Sigmoid colon (tissue), 7 donors: ENCODE measurements at regions of chr18 and their contacts with region 1.

Region 1: DNA sequence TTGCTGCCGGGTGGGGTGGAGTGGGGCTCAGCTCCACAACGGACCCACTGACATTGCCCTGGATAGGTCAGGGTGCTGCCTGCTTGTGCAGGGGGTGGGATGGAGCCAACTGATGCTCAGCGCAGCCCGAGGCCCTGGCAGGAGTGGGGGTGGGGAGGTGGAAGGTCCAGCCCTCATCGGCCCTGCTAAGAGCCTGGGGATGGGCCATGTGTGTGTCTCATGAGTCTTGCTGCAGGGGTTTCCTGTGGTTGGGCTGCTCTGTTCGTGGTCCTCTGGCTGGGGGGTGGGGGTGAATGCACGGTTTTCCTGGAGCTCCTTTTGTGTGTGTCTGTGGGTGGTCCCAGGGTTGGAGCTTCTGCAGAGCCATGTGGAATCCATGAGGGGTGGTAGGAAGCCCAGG is 39.4 kb upstream of the GALR1 start:
- DNase-seq: no peak
- H3K4me3 ChIP-seq: no peak overlapping the region
- H3K27ac ChIP-seq: no peak overlapping the region
- H3K4me1 ChIP-seq: peaks cover 0 to 18% (median 17%) of the 10 kb centered on the region in 4 donors
- H3K27me3 ChIP-seq: no peaks in the 10 kb centered on the region
- CTCF ChIP-seq: no peak
- EP300 ChIP-seq: no peak
- POLR2A ChIP-seq: no peak

Region 2: DNA sequence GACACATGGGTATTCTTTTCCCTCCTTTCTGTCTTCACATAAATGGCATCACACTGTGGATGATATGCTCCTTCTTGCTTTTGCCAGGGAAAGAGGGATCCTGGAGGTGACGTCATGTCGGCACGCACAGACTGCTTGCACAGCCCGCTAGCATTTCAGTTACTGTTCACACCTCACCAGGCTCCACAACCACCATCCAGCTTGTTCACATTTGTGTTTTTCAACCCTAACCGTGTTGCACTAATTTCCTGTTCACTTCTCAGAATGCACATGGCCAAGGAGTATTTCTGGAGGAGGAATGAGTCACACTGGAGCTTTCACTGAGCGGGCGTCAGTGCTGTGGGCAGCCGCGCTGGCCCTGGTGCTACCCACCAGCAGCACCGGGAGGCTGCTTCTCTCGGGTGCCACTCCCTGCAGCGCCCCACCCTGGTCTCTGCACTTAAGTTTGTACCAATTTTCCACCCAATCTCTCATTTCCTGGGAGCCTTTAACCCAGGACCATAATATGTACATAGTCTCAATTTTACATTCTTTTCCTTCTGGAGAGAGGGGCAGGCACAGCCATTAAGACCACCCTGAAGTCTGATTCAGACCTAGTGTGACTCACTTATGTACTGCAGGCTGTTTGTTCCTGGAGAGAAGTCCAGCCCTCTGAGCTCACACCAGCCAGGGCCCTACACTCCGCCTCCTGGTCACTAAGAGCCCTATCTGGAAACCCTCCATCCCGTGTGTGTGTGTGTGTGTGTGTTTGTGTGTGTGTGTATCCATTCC is 142.8 kb before region 1 on chr18:
- intact Hi-C with region 1: loop called (anchors 5 kb)
- DNase-seq: peak; percentile 84
- H3K4me3 ChIP-seq: no peak overlapping the region
- H3K27ac ChIP-seq: peak overlapping the region; percentile 63 to 78 (median 72)
- H3K4me1 ChIP-seq: peaks cover 0 to 51% (median 28%) of the 10 kb centered on the region in 4 donors
- H3K27me3 ChIP-seq: no peaks in the 10 kb centered on the region
- CTCF ChIP-seq: no peak
- EP300 ChIP-seq: no peak
- POLR2A ChIP-seq: no peak

Region 3: DNA sequence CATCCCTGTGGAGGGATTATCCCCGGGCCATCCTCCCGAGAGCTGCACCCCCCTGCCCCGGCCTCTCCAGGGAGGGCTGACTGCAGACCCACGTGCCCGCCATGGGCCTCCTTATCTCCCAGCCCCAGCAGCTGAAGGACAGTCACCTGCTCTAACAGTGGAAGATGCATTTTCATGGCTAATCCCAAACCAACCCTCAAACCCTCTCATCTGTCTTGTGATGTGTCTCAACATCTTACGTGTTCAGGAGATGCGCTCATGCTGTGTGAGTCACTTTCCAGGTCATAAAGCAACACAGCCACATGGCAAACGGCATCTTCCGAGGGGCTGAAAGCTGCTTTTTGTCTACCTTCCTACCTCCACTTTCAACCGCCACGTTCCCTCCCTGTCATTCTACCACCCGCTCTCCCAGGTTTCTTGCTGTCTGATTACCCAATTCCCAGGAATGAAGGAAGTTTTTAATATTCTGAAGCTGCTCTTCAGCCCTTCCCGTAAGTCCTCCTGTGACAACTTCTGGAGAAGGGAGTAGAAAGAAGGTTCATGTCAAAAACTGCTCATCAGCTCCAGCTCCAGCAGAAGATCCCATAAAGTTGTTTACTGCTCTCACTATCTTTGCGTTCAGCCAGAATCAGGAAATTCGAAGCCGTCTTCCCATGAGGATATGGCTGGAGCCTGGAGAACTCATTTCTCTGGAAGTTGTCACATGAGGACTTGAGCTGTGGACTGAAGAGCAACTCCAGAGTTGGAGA is 132.1 kb before region 1 on chr18:
- intact Hi-C with region 1: no loop called
- DNase-seq: no peak
- H3K4me3 ChIP-seq: no peak overlapping the region
- H3K27ac ChIP-seq: peak overlapping the region in 1 of 4 donors; percentile 28
- H3K4me1 ChIP-seq: peaks cover 0 to 11% (median 0%) of the 10 kb centered on the region in 4 donors
- H3K27me3 ChIP-seq: no peaks in the 10 kb centered on the region
- CTCF ChIP-seq: no peak
- EP300 ChIP-seq: no peak
- POLR2A ChIP-seq: no peak

Region 4: GRCh38 chr18:77392321-77392720 is 182.1 kb after region 1 on chr18:
- intact Hi-C with region 1: no loop called
- DNase-seq: no peak
- H3K4me3 ChIP-seq: no peak overlapping the region
- H3K27ac ChIP-seq: no peak overlapping the region
- H3K4me1 ChIP-seq: no peaks in the 10 kb centered on the region
- H3K27me3 ChIP-seq: no peaks in the 10 kb centered on the region
- CTCF ChIP-seq: no peak
- EP300 ChIP-seq: no peak
- POLR2A ChIP-seq: no peak